Panc1 (cell line): ENCODE measurements at regions of chr1 and their contacts with region 1.

Region 1: DNA sequence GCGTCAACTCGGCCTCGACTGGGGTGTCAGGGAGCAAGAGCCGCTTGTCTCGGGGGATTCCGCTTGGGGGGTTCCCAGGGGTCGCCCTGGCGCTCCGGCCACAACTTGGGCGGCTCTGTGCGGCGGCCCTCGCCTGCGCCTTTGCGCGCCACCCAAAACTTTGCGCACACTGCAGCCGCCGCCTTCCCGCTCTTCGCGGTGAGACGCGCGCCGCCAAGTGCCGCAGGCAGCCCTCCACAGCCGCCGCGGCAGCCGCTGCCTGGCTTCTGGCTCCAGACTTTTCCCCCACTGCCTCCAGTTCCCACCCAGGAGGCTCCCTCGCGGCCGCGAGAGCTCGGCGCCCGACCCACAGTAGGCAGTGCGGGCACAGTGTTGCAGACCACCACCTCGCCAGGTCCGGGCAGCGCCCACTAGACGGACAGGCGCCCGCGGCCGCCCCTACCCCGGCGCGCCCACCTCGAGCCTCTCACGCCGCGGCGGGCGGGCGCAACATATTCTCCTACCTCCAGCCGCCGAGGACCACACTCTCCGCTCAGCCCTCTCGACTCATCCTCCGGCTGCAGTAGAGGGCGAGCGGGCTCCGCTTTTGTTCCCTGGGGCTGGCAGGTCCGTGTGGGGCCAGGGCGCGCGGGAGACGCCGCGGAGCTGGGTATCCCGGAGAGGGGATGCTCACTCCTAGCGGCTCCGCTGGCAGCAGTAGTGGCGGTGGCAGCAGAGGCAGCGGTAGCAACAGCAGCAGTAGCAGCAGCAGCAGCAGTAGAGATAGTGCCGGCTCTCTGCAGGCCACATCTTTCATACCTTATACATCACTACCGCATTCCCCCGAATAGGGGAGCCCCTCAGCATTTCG is 296.6 kb downstream of the OMA1 start:
- DNase-seq: no peak
- ATAC-seq: peak; percentile 71
- H3K4me3 ChIP-seq: peak overlapping the region in 1 of 2 experiments; percentile 13; a peak in 1 of 4 replicates
- H3K27ac ChIP-seq: no peak overlapping the region
- H3K4me1 ChIP-seq: no peaks in the 10 kb centered on the region
- H3K27me3 ChIP-seq: peaks cover 13% of the 10 kb centered on the region
- CTCF ChIP-seq: no peak

Region 2: GRCh38 chr1:58412071-58412580 is 162.2 kb after region 1 on chr1:
- CTCF ChIA-PET with region 1: no interaction called
- POLR2A ChIA-PET with region 1: no interaction called
- in situ Hi-C with region 1: no loop called
- intact Hi-C with region 1: no loop called
- DNase-seq: no peak
- ATAC-seq: 0 out of 2 replicates have a peak, but pooled peaks have one; percentile 42
- H3K4me3 ChIP-seq: no peak overlapping the region
- H3K27ac ChIP-seq: peak overlapping the region; percentile 44; the same call in 1 of the 2 replicates
- H3K4me1 ChIP-seq: peaks cover 10% of the 10 kb centered on the region
- H3K27me3 ChIP-seq: no peaks in the 10 kb centered on the region
- CTCF ChIP-seq: no peak

Region 3: DNA sequence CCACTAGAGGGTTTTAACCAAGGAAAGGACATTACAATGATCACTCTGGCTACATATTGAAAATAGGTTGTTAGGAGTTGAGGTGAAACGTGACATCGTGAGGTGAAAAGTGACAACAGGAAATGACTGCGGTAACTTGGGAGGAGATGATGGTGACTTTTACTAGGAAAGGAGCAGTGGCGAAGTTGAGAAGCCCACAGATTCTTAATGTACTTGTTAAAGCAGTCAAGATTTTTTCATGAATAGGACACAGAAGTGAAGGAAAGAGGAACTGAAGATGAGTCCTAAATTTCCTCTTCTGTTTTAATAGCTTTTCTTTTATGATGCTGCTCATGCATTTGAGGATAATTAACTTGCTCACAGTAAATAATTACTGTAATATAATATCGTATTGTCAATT is 237.0 kb after region 1 on chr1:
- CTCF ChIA-PET with region 1: no interaction called
- POLR2A ChIA-PET with region 1: no interaction called
- in situ Hi-C with region 1: no loop called
- intact Hi-C with region 1: no loop called
- DNase-seq: no peak
- ATAC-seq: no peak
- H3K4me3 ChIP-seq: no peak overlapping the region
- H3K27ac ChIP-seq: no peak overlapping the region
- H3K4me1 ChIP-seq: no peaks in the 10 kb centered on the region
- H3K27me3 ChIP-seq: no peaks in the 10 kb centered on the region
- CTCF ChIP-seq: no peak

Region 4: DNA sequence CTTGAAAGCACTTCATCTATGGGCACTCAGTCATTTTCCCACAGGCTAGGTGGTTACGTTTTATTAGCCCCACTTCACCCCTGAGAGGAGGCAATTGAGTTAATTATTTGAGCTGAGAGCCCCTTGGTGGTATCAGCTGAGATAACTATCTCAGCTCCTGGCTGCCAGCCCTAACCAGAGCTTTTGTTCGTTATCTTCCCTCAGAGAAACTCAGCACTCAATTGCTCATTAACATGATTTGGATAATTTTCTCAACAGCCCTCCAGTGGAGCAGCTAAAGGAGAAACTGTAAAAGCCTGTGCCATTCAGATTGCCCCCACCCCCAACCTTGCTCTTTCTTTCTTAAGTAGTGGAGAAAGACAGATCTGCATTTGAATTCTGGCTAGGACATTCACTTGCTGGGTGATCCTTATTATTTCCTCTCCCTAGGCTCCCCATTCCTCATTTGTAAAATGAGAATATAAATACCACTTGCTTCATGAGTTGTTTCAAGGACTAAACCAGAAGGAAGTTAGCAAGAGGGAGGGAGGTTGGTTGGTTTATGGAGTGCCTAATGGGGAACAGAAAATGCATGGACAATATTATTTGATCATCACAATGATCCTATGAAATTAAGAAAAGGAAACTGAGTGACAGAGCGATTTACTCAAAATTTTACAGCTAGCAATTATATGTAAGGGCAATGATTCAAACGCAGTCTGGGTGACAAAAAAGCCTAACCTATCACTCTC is 828.3 kb after region 1 on chr1:
- CTCF ChIA-PET with region 1: interaction called, 16 read pairs
- POLR2A ChIA-PET with region 1: no interaction called
- in situ Hi-C with region 1: no loop called
- intact Hi-C with region 1: no loop called
- DNase-seq: no peak
- ATAC-seq: no peak
- H3K4me3 ChIP-seq: no peak overlapping the region
- H3K27ac ChIP-seq: no peak overlapping the region
- H3K4me1 ChIP-seq: no peaks in the 10 kb centered on the region
- H3K27me3 ChIP-seq: no peaks in the 10 kb centered on the region
- CTCF ChIP-seq: no peak